MCF 10A (cell line): ENCODE measurements at regions of chr14 and their contacts with region 1.

Region 1: GRCh38 chr14:70816525-70816924 is 7.2 kb upstream of the MAP3K9 start:
- DNase-seq: no peak
- H3K4me3 Mint-ChIP-seq: no peak overlapping the region
- H3K27ac Mint-ChIP-seq: no peak overlapping the region
- H3K4me1 Mint-ChIP-seq: no peaks in the 10 kb centered on the region
- H3K27me3 Mint-ChIP-seq: no peaks in the 10 kb centered on the region
- CTCF ChIP-seq: no peak

Region 2: DNA sequence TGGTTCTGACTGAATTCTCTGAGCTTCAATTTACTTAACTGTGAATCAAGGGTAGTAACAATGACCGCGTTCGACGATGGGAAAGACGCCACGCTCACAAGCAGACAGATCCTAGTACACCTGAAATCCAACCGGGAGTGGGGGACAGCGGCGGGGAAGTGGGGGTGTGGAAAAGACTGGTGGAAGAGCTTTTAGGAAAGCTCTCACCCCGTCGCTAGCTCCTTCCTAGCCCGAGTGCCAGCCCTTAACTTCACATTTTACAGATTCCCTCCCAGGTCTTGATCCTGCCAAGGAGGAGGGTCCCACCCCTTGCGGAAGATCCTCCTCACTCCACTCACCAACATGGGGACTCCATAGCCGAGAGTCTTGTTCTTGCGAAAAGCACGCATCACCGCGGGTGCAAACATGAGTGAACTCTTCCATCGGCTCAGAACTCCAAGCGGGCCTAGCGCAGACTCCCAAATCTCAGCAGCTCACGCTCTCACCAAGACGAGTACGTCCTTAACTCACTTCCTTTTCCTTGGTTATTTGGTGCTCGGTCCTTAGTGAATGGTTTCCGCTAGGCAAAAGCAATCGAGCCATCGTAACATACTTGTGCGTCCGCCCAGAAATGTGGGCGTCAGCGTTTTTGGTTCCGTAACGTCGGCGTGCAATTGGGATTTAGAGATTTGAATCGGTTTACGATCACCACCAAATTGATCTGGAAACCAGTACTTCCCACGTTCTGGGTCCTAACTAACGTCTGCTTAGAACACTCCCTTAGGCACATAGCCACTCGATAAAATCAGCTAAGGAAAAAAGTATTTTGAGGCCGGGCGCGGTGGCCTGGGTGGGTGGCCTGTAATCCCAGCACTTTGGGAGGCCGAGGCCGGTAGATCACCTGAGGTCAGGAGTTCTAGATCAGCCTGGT is 457.1 kb before region 1 on chr14 and contains the start of gene COX16:
- CTCF ChIA-PET with region 1: interaction called, 4 read pairs
- POLR2A ChIA-PET with region 1: no interaction called
- intact Hi-C with region 1: loop called (anchors 5 kb)
- DNase-seq: peak; percentile 95
- H3K4me3 Mint-ChIP-seq: peak within 1 kb of the TSS; percentile 98
- H3K27ac Mint-ChIP-seq: peak within 1 kb of the TSS; percentile 98
- H3K4me1 Mint-ChIP-seq: peaks cover 29% of the 10 kb centered on the region
- H3K27me3 Mint-ChIP-seq: no peaks in the 10 kb centered on the region
- CTCF ChIP-seq: no peak
- total RNA-seq, gene COX16: 45.3 and 55.6 TPM in 2 replicates

Region 3: DNA sequence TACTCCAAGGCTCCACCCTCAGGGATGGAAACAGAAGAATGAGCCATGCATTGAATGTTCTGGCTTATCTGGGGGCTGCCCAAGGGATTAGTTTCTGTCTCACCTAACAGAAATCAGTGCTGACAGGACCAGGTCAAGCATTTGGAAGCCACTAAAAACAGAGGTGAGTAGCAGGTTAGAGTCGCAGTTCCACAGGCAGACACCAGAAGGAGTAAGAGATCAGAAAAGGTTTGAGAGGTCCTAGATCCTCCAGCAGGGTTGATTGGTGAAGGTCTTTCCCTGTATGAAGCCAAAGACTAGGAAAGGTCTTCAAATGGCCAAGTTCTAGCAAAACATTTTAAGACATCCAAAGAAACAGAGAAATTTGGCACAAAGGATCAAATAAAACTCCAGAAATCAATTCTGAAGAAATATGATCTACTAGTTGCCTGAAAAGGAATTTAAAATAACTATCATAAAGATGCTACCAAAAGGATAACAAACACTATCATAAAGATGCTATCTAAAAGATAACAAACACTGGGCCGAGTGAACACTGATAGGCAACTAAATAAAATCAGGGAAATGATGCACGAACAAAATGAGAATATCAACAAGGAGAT is 194.3 kb before region 1 on chr14:
- CTCF ChIA-PET with region 1: interaction called, 42 read pairs
- POLR2A ChIA-PET with region 1: no interaction called
- intact Hi-C with region 1: loop called (anchors 1 kb)
- DNase-seq: peak; percentile 71
- H3K4me3 Mint-ChIP-seq: no peak overlapping the region
- H3K27ac Mint-ChIP-seq: no peak overlapping the region
- H3K4me1 Mint-ChIP-seq: no peaks in the 10 kb centered on the region
- H3K27me3 Mint-ChIP-seq: no peaks in the 10 kb centered on the region
- CTCF ChIP-seq: peak; percentile 76

Region 4: DNA sequence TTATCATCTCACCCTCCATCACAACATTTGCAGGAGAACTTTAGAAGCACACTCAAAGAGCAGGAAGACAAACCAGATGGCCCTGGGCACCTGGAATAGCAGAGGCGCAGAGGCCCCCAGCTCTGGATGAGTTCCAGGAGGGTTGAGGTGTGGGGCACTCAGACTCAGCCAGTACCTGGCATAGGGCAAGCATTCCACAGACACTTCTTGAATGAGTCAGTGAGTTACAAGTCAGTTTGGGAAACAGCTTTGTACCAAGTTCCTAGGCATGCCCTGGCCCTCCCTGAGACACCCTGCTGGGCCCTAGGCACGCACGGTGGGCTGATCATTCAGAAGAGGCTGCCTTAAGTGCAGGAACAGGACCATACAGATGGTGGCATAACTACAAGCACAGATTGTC is 61.5 kb before region 1 on chr14:
- CTCF ChIA-PET with region 1: interaction called, 14 read pairs
- POLR2A ChIA-PET with region 1: interaction called, 69 read pairs
- intact Hi-C with region 1: no loop called
- DNase-seq: peak; percentile 94
- H3K4me3 Mint-ChIP-seq: no peak overlapping the region
- H3K27ac Mint-ChIP-seq: peak overlapping the region; percentile 89
- H3K4me1 Mint-ChIP-seq: peaks cover 24% of the 10 kb centered on the region
- H3K27me3 Mint-ChIP-seq: no peaks in the 10 kb centered on the region
- CTCF ChIP-seq: no peak

Region 5: DNA sequence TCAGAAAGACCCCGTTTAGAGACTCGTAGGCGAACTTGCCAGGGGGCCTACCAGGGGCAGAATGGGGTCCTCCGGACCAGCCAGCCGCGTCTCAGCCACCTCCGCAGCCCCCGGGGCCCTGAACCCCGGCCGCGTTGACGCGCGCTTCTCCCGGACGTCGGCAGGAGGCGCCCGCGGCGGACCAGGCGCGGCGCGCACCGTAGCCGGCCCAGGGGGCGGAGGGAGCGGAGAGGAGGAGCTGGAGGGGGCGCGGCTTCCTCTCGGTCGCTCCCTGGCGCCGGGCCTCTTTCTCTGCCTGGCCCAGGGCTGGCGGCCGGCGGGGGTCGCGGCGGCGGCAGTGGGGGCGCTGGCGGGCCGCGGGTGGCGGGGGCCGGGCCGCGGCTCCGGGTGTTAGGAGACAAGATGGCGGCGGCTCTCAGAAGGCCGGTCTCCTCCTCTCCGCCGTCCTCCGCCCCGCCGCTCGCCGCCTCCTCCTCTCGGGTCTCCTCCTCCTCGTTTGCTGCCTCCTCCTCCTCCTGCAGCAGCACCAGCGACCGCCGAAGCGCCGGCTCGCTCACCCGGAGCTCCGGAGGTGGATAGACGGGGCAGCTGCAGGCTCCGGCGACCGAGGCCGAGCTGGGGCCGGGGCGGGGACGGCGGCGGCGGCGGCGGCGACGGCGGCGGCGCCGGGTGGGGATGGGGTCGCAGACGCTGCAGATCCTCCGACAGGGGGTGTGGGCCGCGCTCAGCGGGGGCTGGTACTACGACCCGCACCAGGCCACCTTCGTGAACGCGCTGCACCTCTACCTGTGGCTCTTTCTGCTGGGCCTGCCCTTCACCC is 90.9 kb after region 1 on chr14 and contains the start of gene PCNX1:
- CTCF ChIA-PET with region 1: interaction called, 30 read pairs
- POLR2A ChIA-PET with region 1: interaction called, 6 read pairs
- intact Hi-C with region 1: loop called (anchors 2 kb)
- DNase-seq: peak; percentile 83
- H3K4me3 Mint-ChIP-seq: peak within 1 kb of the TSS; percentile 97
- H3K27ac Mint-ChIP-seq: peak within 1 kb of the TSS; percentile 96
- H3K4me1 Mint-ChIP-seq: peaks cover 33% of the 10 kb centered on the region
- H3K27me3 Mint-ChIP-seq: no peaks in the 10 kb centered on the region
- CTCF ChIP-seq: peak; percentile 92
- total RNA-seq, gene PCNX1: 48.7 and 55.6 TPM in 2 replicates